ENCODE measurements at regions of chr4 and their contacts with region 1.

Region 1: GRCh38 chr4:55395529-55396307 is at the start of gene TMEM165:
- DNase-seq: peak; percentile 96
- ATAC-seq: peak; percentile 98
- total RNA-seq, gene TMEM165: 38.3 TPM

Region 2: DNA sequence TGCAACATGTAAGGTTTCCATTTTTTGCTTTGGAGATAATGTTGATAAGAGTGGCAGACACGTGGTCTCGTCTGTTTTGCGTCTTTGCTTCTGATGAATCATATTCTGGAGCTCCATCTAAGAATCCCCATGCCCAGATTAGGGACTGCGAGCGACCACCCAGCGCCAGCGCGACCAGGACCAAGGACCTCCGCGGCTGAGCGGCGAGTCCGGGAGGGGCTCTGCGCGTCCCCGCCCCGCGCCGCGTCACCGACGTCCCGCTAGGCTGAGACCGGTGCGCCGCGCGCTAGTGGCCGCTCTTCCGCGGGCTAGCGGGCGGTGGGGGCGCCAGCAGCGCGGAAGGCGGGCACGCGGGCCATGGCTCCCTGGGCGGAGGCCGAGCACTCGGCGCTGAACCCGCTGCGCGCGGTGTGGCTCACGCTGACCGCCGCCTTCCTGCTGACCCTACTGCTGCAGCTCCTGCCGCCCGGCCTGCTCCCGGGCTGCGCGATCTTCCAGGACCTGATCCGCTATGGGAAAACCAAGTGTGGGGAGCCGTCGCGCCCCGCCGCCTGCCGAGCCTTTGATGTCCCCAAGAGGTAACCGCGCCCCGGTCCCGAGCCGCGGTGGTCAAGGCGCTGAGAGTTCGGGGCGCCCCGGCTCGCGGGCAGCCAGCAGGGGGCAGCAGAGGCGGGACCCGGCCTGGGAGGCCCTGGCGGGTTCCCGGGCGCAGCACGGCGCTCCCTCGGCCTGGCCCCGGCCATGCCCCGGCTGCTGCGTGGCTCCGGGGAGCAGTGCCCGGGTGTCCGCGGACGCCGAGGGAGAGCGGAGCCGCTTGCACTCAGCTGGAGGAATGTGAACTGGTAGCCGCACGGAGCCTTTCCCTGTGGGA is 49.5 kb before region 1 on chr4 and contains the start of gene SRD5A3:
- intact Hi-C with region 1: loop called (anchors 1 kb)
- DNase-seq: peak; percentile 93
- ATAC-seq: peak; percentile 98
- total RNA-seq, gene SRD5A3: 9.5 TPM

Region 3: DNA sequence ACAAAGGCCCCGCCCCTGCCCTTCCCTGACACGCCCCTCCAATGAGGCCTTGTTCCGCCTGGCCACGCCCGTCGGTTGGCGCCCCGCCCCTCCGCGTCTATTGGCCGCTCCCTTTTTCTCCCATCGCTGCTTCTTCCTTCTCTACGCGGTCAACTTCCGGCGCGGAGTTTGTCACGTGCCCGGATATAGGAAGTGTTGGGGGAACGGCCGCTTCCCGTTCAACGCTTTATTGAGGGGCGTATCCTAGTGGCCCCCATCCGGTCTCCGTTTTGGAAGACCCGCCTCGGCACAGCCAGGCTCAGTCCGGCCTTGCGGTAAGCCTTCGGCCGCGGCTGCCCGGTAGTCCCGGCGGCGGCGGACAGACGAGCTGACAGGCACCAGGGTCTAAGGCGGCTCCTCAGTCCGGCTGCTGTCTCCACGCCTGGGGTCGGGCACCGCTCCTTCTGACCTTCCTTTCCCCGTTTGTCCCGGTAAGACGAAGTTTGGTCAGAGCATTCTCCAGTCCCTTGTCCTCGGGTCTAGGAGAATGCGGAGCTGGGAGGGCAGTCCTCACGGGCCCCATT is 457.8 kb after region 1 on chr4 and contains the start of gene EXOC1:
- intact Hi-C with region 1: loop called (anchors 5 kb)
- DNase-seq: peak; percentile 100
- ATAC-seq: peak; percentile 99
- total RNA-seq, gene EXOC1: 19.8 TPM

Measured in Right ventricle myocardium inferior (tissue), 1 donor.